Heart left ventricle (tissue), 16 donors: ENCODE measurements at regions of chr19 and their contacts with region 1.

Region 1: DNA sequence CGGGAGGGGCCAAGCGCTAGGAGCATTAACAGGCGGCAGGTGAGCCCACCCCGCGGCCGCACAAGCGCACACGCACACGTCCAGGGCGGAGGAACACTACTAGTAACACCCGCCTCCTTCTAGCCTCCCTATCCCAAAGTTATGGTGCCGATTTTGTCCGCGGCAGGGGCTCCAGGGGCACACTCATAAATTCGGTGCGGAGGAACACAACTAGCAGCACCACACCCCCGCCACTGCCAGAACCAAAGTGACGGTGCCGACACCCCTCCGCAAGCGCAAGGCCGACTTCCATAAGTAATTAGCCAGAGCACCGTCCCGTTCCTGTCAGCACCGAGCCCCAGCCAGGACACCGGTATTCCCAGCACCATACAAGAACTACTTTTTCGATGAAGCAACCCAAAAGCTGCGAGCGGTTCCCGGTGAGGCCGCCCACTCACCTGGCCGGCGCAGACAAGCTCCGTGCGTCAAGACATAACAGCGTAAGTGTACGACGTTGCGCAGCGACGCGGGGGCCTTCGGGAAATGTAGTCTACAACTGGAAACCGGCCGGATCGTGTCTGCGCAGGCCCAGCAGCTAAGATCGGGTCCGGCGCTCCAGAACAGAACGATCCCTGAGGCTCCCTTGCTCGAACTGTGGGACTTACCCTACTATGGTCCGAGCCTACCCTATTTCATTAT is at the starts of genes ZNF540 and ZNF571:
- DNase-seq: peak; percentile 93 to 96 (median 95)
- ATAC-seq: peak; percentile 99 to 100 (median 99)
- H3K4me3 ChIP-seq: peak within 1 kb of the TSS; percentile 34 to 94 (median 79)
- H3K27ac ChIP-seq: peak within 1 kb of the TSS; percentile 74 to 92 (median 90)
- H3K4me1 ChIP-seq: peaks cover 0 to 24% (median 17%) of the 10 kb centered on the region in 12 donors
- H3K27me3 ChIP-seq: no peaks in the 10 kb centered on the region
- CTCF ChIP-seq: no peak
- POLR2A ChIP-seq: peak; percentile 47 to 76
- total RNA-seq, gene ZNF540: 1.4 to 8.2 (median 5.0) TPM
- total RNA-seq, gene ZNF571: 2.1 to 3.3 (median 2.7) TPM

Region 2: DNA sequence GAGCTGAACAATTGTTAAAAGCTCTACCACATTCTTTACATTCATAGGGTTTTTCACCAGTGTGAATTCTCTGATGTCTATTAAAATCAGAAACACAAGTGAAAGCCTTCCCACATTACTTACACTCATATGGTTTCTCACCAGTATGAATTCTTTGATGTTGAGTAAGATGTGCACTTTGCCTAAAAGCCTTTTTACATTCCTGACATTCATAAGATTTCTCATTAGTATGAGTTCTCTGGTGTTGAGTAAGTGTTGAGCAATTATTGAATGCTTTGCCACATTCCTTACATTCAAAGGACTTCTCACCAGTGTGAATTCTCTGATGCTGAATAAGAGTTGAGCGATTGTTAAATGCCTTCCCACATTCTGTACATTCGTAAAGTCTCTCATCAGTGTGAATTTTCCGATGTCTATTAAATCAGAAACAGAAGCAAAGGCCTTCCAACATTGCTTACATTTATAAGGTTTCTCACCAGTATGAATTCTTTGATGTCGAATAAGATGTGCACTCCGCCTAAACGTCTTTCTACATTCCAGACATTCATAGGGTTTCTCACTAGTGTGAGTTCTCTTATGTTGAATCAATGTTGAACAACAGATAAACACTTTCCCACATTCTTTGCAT is 75.0 kb after region 1 on chr19:
- intact Hi-C with region 1: no loop called
- DNase-seq: no peak
- ATAC-seq: no peak
- H3K4me3 ChIP-seq: no peak overlapping the region
- H3K27ac ChIP-seq: no peak overlapping the region
- H3K4me1 ChIP-seq: no peaks in the 10 kb centered on the region
- H3K27me3 ChIP-seq: no peaks in the 10 kb centered on the region
- CTCF ChIP-seq: no peak
- POLR2A ChIP-seq: no peak

Region 3: DNA sequence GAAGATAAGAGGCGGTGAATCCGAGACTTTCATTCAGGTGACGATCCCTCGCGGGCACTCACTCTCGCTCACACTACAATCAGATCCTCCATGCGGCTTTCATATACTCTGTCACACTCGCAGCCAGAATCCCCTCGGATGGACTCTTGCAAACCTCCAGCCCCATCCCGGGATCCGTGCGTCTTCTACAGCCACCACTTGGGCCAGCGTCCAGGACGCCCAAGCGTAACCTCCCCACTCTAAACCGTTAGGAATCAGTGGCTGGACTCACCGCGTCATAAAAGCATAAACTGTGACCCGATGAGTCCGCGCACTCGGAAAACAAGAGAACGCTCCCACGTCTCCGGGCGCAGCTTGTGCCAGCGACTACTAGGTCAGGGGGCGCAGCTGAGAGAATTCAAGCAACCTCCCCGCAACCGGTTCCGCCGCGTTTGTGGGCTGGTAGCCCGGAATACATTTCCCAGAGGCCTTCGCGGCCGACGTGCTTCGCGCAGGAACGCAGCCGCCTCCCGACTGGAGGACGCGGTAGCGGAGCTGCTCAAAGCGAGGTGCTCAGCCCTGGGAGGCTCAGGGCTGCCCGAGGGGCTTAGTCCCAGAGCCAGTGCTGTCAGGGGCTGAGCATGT is 97.5 kb after region 1 on chr19:
- intact Hi-C with region 1: loop called in 2 of 10 experiments (anchors 1 to 10 kb)
- DNase-seq: peak; percentile 87 to 93 (median 91)
- ATAC-seq: peak; percentile 93 to 98 (median 98)
- H3K4me3 ChIP-seq: peak overlapping the region; percentile 53 to 84 (median 69)
- H3K27ac ChIP-seq: peak overlapping the region; percentile 27 to 93 (median 82)
- H3K4me1 ChIP-seq: peaks cover 0 to 16% (median 8%) of the 10 kb centered on the region in 12 donors
- H3K27me3 ChIP-seq: no peaks in the 10 kb centered on the region
- CTCF ChIP-seq: peak in 5 of 12 donors; percentile 18 to 37 (median 32)
- POLR2A ChIP-seq: peak in 1 of 2 donors; percentile 64

Region 4: DNA sequence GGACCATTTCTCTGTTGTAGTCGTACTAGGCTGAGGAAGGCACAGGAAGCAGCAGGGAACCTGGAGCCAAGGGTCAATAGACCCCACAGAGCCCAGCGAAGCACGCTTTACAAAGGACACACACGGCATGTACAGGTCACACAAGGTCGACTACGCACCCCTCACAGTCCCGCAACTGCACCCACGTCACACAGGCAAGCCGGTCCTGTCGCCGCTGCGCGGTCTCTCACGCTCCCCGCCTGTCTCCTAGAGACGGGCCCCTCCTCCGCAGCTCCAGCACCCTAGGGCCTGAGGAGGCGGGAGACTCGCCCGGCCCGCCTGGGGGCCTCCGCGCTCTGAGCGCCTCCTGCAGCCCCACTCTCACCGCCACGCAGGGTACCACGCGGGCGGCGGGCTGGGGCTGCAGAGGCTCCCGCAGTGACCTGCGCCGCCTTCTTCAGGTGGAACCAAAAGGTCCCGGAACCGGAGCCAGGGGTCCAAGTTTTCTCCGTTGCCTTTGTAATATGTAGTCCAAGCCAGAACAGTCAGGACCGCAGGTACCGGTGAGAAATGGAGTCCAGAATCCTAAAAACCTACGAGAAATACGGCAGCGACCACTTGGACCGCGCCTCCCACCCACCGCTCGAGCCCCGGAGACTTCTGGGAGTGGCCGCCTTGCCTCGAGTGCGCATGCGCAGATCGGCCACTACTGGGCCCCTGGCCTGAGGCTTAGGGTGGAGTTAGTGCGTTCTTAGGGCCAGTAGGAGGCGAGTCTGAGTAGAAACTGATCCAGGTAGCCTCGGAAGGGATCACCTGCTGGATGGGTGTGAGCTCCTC is 124.9 kb after region 1 on chr19 and contains the start of gene ZNF607:
- intact Hi-C with region 1: loop called in 1 of 10 experiments (anchors 5 kb)
- DNase-seq: peak; percentile 91 to 96 (median 94)
- ATAC-seq: peak; percentile 99
- H3K4me3 ChIP-seq: peak within 1 kb of the TSS; percentile 70 to 100 (median 86)
- H3K27ac ChIP-seq: peak within 1 kb of the TSS in 11 of 12 donors; percentile 74 to 91 (median 86)
- H3K4me1 ChIP-seq: peaks cover 0 to 16% (median 10%) of the 10 kb centered on the region in 12 donors
- H3K27me3 ChIP-seq: no peaks in the 10 kb centered on the region
- CTCF ChIP-seq: peak; percentile 43 to 82 (median 68)
- POLR2A ChIP-seq: peak in 1 of 2 donors; percentile 46
- total RNA-seq, gene ZNF607: 4.5 to 7.9 (median 6.0) TPM